ENCODE measurements at regions of chr10 and their contacts with region 1.

Region 1: GRCh38 chr10:71092812-71093401 is 119.5 kb upstream of the UNC5B start:
- DNase-seq: no peak
- H3K4me3 Mint-ChIP-seq: no peak overlapping the region
- H3K27ac Mint-ChIP-seq: no peak overlapping the region
- H3K4me1 Mint-ChIP-seq: peaks cover 10% of the 10 kb centered on the region
- H3K27me3 Mint-ChIP-seq: peaks cover 19% of the 10 kb centered on the region

Region 2: DNA sequence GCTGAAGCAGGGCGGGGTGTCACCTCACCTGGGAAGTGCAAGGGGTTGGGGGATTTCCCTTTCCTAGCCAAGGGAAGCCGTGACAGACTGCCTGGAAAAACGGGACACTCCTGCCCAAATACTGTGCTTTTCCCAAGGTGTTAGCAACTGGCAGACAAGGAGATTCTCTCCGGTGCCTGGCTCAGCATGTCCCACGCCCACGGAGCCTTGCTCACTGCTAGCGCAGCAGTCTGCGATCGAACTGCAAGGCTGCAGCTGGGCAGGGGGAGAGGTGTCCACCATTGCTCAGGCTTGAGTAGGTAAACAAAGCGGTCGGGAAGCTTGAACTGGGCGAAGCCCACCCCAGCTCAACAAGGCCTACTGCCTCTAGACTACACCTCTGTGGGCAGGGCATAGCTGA is 1342.7 kb after region 1 on chr10:
- CTCF ChIA-PET with region 1: no interaction called
- POLR2A ChIA-PET with region 1: no interaction called
- intact Hi-C with region 1: loop called (anchors 10 kb)
- DNase-seq: no peak
- H3K4me3 Mint-ChIP-seq: no peak overlapping the region
- H3K27ac Mint-ChIP-seq: no peak overlapping the region
- H3K4me1 Mint-ChIP-seq: no peaks in the 10 kb centered on the region
- H3K27me3 Mint-ChIP-seq: no peaks in the 10 kb centered on the region

Measured in activated CD4-positive, alpha-beta memory T cell treated with anti-CD3 and anti-CD28 coated beads for 36 hours (primary cell).